ENCODE measurements at regions of chr12 and their contacts with region 1.

Region 1: GRCh38 chr12:83823431-83823963 is 1089.1 kb downstream of the SLC6A15 start:
- DNase-seq: peak; percentile 16
- CTCF ChIP-seq: peak; percentile 67

Region 2: GRCh38 chr12:82685790-82686167 is 1137.7 kb before region 1 on chr12:
- in situ Hi-C with region 1: loop called (anchors 25 kb)
- DNase-seq: peak; percentile 64
- CTCF ChIP-seq: peak; percentile 89

Region 3: DNA sequence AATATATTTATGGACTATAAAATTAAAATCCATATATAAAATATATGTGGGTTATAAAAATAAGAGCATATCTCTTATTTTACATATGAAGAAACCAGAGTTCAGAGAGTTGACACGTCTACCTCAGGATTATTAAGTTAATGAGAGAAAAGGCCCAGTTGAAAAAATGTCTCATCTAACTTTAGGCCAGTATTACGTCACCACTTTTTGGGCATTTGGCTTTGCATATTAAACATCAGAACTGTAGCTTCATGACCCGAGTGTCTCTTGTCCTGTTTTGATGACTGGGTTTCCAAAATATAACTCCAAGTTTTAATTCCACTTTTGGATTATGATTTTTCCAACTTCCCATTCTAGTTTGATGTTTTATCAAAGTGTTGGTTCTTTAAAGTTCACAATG is 63.0 kb after region 1 on chr12:
- in situ Hi-C with region 1: no loop called
- DNase-seq: no peak
- CTCF ChIP-seq: no peak